SK-N-SH (cell line): ENCODE measurements at regions of chr10 and their contacts with region 1.

Region 1: DNA sequence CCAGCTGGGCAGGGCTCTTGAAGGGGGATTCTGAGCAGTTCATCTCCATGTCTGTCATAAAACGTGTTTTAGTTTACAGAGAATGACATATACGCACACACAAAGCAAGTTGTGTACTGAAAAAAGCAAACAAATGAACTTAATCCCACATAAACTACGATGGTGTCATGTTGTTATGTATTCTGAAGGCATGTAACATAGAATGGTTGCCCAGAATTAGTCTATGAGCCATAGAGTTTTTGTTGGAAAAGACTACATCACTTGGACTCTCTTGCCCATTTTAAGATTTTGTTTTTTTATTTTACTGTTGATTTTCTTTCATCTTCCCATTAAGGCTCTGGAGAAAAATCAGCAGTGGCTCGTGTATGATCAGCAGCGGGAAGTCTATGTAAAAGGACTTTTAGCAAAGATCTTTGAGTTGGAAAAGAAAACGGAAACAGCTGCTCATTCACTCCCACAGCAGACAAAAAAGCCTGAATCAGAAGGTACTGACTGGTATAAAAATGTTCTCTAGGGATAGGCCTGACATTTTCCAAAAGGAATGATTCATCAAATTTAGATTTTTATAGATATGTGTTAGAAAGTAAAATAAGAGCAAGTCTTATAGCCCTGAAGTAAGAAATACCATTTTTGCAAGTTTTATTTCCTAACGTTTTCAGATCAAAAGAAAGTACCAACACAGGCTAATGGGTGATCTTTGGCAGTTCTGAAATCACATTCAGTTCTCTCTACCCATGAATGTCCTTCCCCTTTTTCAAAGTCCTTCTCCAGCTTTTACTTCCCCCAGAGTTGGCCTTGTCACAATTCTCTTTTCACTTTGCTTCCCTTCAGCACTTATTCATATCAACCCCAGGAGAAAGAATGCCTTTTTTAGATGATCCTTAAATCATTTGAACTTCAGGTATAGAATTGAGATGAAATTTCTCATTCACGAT is 18.9 kb downstream of the CEP55 start:
- DNase-seq: no peak
- H3K4me3 ChIP-seq: no peak overlapping the region
- H3K27ac ChIP-seq: peak overlapping the region in 1 of 2 experiments; percentile 66; a peak in 2 of 4 replicates
- H3K4me1 ChIP-seq: peaks cover 0 to 21% of the 10 kb centered on the region in 2 experiments; a peak in 2 of 4 replicates
- H3K27me3 ChIP-seq: no peaks in the 10 kb centered on the region
- CTCF ChIP-seq: no peak
- EP300 ChIP-seq: no peak
- RAD21 ChIP-seq: no peak

Region 2: DNA sequence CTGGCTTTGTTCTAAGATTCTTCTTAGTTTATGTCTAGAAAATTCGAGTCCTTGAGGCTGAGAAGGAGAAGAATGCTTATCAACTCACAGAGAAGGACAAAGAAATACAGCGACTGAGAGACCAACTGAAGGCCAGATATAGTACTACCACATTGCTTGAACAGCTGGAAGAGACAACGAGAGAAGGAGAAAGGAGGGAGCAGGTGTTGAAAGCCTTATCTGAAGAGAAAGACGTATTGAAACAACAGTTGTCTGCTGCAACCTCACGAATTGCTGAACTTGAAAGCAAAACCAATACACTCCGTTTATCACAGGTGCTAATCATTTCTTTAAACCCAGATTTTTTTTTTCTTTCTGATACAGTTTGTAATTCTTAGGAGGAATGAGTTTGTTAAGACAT is 12.3 kb before region 1 on chr10:
- CTCF ChIA-PET with region 1: interaction called, 16 read pairs
- POLR2A ChIA-PET with region 1: no interaction called
- DNase-seq: no peak
- H3K4me3 ChIP-seq: no peak overlapping the region
- H3K27ac ChIP-seq: 0 out of 4 replicates have a peak overlapping the region, but pooled peaks of 1 of the 2 experiments have one; percentile 8
- H3K4me1 ChIP-seq: peaks cover 0 to 4% of the 10 kb centered on the region in 2 experiments; a peak in 3 of 4 replicates
- H3K27me3 ChIP-seq: no peaks in the 10 kb centered on the region
- CTCF ChIP-seq: no peak
- EP300 ChIP-seq: no peak
- RAD21 ChIP-seq: no peak

Region 3: DNA sequence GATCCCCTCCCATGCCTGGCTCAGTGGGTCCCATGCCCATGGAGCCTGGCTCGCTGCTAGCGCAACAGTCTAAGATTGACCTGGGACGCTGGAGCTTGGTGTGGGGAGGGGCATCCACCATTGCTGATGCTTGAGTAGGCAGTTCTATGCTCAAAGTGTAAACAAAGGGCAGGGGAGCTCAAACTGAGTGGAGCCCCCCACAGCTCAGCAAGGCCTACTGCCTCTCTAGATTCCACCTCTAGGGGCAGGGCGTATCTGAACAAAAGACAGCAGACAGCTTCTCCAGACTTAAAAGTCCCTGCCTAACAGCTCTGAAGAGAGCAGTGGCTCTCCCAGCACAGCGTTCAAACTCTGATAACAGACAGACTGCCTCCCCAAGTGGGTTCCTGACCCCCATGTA is 20.0 kb after region 1 on chr10:
- CTCF ChIA-PET with region 1: interaction called, 13 read pairs
- POLR2A ChIA-PET with region 1: no interaction called
- DNase-seq: no peak
- H3K4me3 ChIP-seq: no peak overlapping the region
- H3K27ac ChIP-seq: no peak overlapping the region
- H3K4me1 ChIP-seq: no peaks in the 10 kb centered on the region
- H3K27me3 ChIP-seq: no peaks in the 10 kb centered on the region
- CTCF ChIP-seq: no peak
- EP300 ChIP-seq: no peak
- RAD21 ChIP-seq: no peak